Naive thymus-derived CD8-positive, alpha-beta T cell (primary cell): ENCODE measurements at regions of chr6 and their contacts with region 1.

Region 1: DNA sequence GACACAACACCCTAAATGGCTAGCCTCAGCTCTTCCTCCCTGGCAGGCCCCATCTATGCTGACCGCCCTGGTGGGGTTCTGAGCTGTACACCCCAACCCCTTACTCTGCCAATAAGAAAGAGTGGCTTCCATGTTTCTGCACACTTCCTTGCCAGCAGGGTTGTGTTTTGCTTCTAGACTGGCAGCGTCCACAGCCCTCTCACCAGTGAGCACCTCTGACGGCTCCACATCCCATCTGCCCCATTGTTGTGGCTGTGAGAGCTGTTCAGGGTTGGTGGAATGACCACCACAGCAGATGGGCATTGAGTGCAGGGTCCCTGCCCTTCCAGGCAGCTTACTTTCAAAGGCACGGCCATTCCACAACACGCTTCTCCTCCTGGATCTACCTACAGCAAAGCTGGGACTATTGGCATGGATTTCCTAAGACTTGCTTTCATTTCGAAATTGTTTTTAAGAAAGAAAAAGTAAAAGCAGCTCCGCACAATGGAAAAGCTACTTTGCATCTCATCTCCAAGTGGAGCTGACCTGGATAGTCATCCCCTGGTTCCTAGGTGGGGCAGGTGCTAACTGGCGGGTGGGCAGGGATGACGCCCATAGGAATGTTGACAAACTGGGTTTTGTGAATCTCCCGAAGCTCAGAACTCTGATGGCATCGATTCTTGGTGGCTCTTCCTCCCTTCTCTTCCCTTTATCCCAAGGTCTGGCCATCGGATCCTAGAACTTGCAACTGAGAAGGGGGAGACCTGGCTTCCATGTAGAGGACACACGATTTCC is 12.2 kb upstream of the EZR start:
- DNase-seq: no peak
- ATAC-seq: no peak
- H3K4me3 Mint-ChIP-seq: no peak overlapping the region
- H3K27ac Mint-ChIP-seq: peak overlapping the region in 5 of 10 donors; percentile 3 to 66 (median 59)
- H3K4me1 Mint-ChIP-seq: peaks cover 0 to 17% (median 2%) of the 10 kb centered on the region in 4 donors
- H3K27me3 Mint-ChIP-seq: peaks cover 0 to 1% (median 0%) of the 10 kb centered on the region in 5 donors

Region 2: GRCh38 chr6:158843751-158844683 is 12.6 kb after region 1 on chr6:
- POLR2A ChIA-PET with region 1: interaction called, 11 read pairs
- DNase-seq: no peak
- ATAC-seq: no peak
- H3K4me3 Mint-ChIP-seq: no peak overlapping the region
- H3K27ac Mint-ChIP-seq: peak overlapping the region in 5 of 10 donors; percentile 3 to 72 (median 16)
- H3K4me1 Mint-ChIP-seq: peaks cover 0 to 34% (median 1%) of the 10 kb centered on the region in 4 donors
- H3K27me3 Mint-ChIP-seq: no peaks in the 10 kb centered on the region

Region 3: DNA sequence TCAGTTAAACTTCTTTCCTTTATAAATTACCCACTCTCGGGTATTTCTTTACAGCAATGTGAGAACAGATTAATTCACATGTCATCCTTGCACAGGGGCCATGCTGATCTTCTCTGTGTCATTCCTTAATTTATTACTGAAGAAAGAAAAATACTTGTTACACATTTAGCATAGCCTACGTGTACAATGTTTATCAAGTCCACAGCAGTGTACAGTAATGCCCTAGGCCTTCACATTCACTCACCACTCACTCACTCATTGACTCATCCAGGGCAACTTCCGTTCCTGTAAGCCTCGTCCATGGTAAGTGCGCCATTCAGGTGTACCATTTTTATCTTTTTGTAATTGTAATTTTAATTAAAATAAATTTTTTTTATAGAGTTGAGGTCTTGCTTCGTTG is 95.0 kb after region 1 on chr6:
- POLR2A ChIA-PET with region 1: no interaction called
- DNase-seq: no peak
- ATAC-seq: no peak
- H3K4me3 Mint-ChIP-seq: no peak overlapping the region
- H3K27ac Mint-ChIP-seq: peak overlapping the region in 2 of 10 donors; percentile 24 to 49
- H3K4me1 Mint-ChIP-seq: peaks cover 0 to 1% (median 0%) of the 10 kb centered on the region in 4 donors
- H3K27me3 Mint-ChIP-seq: peaks cover 0 to 1% (median 0%) of the 10 kb centered on the region in 5 donors